K562 (cell line): ENCODE measurements at regions of chr3 and their contacts with region 1.

Region 1: DNA sequence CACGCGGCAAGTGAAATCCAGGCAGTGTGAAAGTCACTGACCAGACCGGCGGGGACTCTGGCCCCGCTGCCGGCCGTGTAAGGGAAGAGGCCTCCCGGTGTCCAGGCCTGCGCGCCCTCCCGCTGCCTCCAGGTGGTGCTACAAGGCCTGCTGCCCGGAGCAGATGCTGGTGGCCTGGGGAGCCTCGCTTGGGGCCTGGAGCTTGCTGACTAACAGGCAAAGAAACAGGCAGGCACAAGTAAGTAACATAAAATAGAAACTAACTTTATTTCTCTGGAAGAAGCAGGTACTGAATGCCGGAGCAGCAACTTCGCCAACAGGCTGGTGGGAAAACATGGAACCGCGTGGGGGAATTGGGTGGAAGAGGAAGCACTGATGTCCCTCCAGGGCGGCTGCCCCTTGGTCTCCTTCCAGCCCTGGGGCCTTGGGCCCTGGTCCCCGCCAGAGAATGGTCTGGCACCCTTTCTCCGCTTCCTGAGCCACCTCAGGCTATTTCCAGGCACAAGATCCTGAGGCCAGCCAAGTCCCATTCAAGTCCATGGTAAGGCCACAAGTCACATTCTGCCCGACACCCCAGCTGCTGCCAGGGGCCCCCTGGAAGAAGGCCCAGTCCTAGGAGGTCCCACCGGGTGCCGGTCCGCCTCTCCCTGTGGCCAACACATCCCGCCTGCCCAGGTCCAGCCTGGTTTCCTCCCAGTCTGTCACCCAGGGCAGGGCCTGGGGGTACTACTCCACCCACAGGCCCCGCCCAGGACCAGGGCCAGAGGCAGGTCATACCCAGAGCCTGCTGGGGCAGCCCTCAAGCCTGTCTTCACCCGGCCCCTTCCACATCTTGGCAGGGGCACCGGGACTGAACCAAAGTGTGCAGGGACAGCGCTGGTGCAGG is 45.0 kb downstream of the TNK2 start:
- DNase-seq: peak; percentile 85 to 91 (median 86)
- ATAC-seq: peak; percentile 99
- H3K4me3 ChIP-seq: no peak overlapping the region
- H3K27ac ChIP-seq: no peak overlapping the region
- H3K4me1 ChIP-seq: peaks cover 7 to 35% of the 10 kb centered on the region in 2 experiments; a peak in 3 of 5 replicates
- H3K27me3 ChIP-seq: no peaks in the 10 kb centered on the region
- CTCF ChIP-seq: peak; percentile 96 to 98 (median 97)
- EP300 ChIP-seq: no peak
- POLR2A ChIP-seq: no peak
- RAD21 ChIP-seq: peak; percentile 94 to 98

Region 2: GRCh38 chr3:195803289-195803950 is 59.9 kb before region 1 on chr3:
- CTCF ChIA-PET with region 1: no interaction called
- POLR2A ChIA-PET with region 1: no interaction called
- in situ Hi-C with region 1: no loop called
- intact Hi-C with region 1: no loop called
- DNase-seq: peak in 2 of 4 experiments; percentile 39 to 44
- ATAC-seq: peak; percentile 40
- H3K4me3 ChIP-seq: no peak overlapping the region
- H3K27ac ChIP-seq: peak overlapping the region; percentile 82
- H3K4me1 ChIP-seq: peaks cover 52 to 54% of the 10 kb centered on the region in 2 experiments
- H3K27me3 ChIP-seq: no peaks in the 10 kb centered on the region
- CTCF ChIP-seq: no peak
- EP300 ChIP-seq: no peak
- POLR2A ChIP-seq: no peak
- RAD21 ChIP-seq: no peak

Region 3: DNA sequence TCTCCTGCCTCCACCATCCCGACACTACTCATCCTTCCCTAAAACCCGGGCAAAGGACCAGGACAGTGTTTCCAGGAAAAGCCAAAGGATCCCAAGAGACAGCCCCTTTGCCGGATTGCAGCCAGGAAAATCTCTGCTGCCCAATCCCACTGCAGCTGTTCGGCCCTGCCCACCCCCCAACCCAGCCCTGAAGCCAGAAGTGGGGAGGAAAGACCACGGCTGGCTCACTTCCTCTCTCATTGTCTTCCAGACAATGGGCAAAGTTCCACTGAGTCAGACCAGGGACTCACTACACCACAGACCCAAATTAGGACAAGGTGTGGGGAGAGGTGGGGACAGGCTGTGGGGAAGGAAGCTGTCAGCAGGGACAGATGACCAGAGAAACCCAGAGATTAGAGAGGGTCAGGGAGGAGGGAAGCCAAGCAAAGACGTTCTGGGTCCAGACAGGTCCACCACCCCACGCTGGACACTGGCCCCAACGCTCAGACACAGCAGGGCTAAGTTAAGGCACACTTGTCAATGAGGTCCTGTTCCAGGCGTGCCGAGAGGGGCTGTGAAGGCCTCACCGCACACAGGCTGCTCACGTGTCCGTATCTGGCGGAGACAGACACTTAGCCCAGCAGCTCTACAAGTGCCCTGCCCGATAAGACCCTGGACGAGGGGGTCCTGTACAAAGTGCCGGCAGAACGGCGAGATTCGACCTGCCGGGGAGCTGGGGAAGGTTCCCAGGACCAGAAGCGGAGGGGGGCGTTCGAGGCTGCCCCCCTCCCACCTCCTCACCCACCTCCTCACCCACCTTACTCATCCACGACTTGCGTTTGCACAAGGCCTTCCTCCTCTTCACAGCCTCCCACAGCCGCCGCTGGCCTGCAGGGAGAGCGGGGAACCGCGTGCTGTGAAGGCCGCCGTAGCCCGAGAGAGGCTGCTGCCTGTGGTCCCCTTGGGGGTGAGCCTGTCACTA is 23.1 kb after region 1 on chr3:
- CTCF ChIA-PET with region 1: no interaction called
- POLR2A ChIA-PET with region 1: no interaction called
- in situ Hi-C with region 1: loop called (anchors 5 kb)
- intact Hi-C with region 1: loop called (anchors 1 kb)
- DNase-seq: peak; percentile 53 to 78 (median 62)
- ATAC-seq: peak; percentile 84
- H3K4me3 ChIP-seq: no peak overlapping the region
- H3K27ac ChIP-seq: no peak overlapping the region; the same call in 2 of the 3 replicates
- H3K4me1 ChIP-seq: peaks cover 19 to 59% of the 10 kb centered on the region in 2 experiments; a peak in 4 of 5 replicates
- H3K27me3 ChIP-seq: no peaks in the 10 kb centered on the region
- CTCF ChIP-seq: no peak
- EP300 ChIP-seq: peak; percentile 37; the same call in 1 of the 2 replicates
- POLR2A ChIP-seq: no peak
- RAD21 ChIP-seq: no peak